SK-MEL-5 (cell line): ENCODE measurements at regions of chr1 and their contacts with region 1.

Region 1: GRCh38 chr1:217839161-217839560 is 208.0 kb downstream of the SPATA17 start:
- DNase-seq: no peak

Region 2: DNA sequence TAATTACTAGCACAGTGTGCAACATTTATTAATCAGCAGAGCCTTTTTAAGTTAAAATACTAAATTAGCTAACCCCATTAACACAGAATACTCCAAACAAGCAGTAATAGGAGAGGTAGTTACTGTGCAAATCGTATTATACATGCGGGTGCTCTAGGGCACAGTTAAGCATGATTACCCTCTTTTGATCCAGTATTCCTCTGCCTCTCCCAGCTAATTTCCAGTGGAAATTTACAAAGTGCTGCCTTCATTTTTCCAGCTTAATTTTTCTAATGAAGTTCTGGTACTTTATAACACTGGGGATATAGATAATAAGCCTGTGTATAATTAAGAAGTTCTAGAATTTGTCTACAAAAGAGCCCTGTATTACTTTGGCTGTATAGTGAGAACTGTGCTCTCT is 48.1 kb before region 1 on chr1:
- in situ Hi-C with region 1: loop called (anchors 5 kb)
- DNase-seq: no peak